ENCODE measurements at regions of chr16 and their contacts with region 1.

Region 1: GRCh38 chr16:57106767-57107166 is 14.4 kb downstream of the CPNE2 start:
- DNase-seq: peak in 3 of 7 donors; percentile 33 to 49 (median 41)
- H3K4me3 ChIP-seq: no peak overlapping the region
- H3K27ac ChIP-seq: no peak overlapping the region
- H3K4me1 ChIP-seq: peaks cover 0 to under 1% of the 10 kb centered on the region in 2 donors
- H3K27me3 ChIP-seq: no peaks in the 10 kb centered on the region
- CTCF ChIP-seq: no peak
- POLR2A ChIP-seq: no peak

Region 2: DNA sequence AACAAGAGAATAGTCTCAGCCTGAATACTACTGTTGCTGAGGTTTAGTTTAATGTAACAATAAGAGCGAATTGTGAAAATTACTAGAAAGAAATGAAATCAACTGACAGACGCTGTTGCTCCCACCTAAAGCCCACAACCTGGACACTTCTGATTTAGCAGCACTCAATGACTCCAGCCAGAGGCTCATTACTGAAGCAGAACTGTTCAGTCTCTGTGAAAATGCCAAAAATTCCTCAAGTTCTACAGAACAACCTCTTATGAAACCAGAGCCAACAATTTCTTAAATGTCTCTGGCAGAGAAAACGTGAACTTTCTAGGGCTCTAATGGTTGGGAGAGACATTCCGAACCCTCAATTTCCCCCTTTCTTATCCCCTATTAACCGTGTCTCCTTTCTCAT is 69.1 kb after region 1 on chr16:
- intact Hi-C with region 1: no loop called
- DNase-seq: no peak
- H3K4me3 ChIP-seq: no peak overlapping the region
- H3K27ac ChIP-seq: no peak overlapping the region
- H3K4me1 ChIP-seq: no peaks in the 10 kb centered on the region
- H3K27me3 ChIP-seq: no peaks in the 10 kb centered on the region
- CTCF ChIP-seq: no peak
- POLR2A ChIP-seq: no peak

Region 3: GRCh38 chr16:57413301-57413730 is 306.5 kb after region 1 on chr16:
- intact Hi-C with region 1: loop called in 1 of 2 experiments (anchors 10 kb)
- DNase-seq: no peak
- H3K4me3 ChIP-seq: no peak overlapping the region
- H3K27ac ChIP-seq: no peak overlapping the region
- H3K4me1 ChIP-seq: peaks cover 0 to 13% of the 10 kb centered on the region in 2 donors
- H3K27me3 ChIP-seq: no peaks in the 10 kb centered on the region
- CTCF ChIP-seq: no peak
- POLR2A ChIP-seq: no peak